ENCODE measurements at regions of chr17 and their contacts with region 1.

Region 1: GRCh38 chr17:55238179-55238930 is 26.4 kb upstream of the HLF start:
- DNase-seq: peak; percentile 94 to 97
- ATAC-seq: peak; percentile 98 to 100 (median 100)
- H3K4me3 ChIP-seq: peak overlapping the region; percentile 68
- H3K27ac ChIP-seq: peak overlapping the region; percentile 71
- H3K4me1 ChIP-seq: peaks cover 6% of the 10 kb centered on the region
- H3K27me3 ChIP-seq: peaks cover 0 to 2% (median 0%) of the 10 kb centered on the region in 3 donors
- CTCF ChIP-seq: no peak

Region 2: GRCh38 chr17:55053855-55054254 is 184.5 kb before region 1 on chr17:
- intact Hi-C with region 1: no loop called
- DNase-seq: no peak
- ATAC-seq: no peak
- H3K4me3 ChIP-seq: no peak overlapping the region
- H3K27ac ChIP-seq: no peak overlapping the region
- H3K4me1 ChIP-seq: no peaks in the 10 kb centered on the region
- H3K27me3 ChIP-seq: no peaks in the 10 kb centered on the region
- CTCF ChIP-seq: peak; percentile 32

Region 3: GRCh38 chr17:55264645-55265298 is 26.4 kb after region 1 on chr17 and contains the start of gene HLF:
- intact Hi-C with region 1: loop called (anchors 1 to 2 kb)
- DNase-seq: peak; percentile 88 to 92
- ATAC-seq: peak; percentile 95 to 98 (median 96)
- H3K4me3 ChIP-seq: peak within 1 kb of the TSS; percentile 74
- H3K27ac ChIP-seq: peak within 1 kb of the TSS; percentile 61
- H3K4me1 ChIP-seq: peaks cover 14% of the 10 kb centered on the region
- H3K27me3 ChIP-seq: no peaks in the 10 kb centered on the region
- CTCF ChIP-seq: no peak
- total RNA-seq, gene HLF: 3.7 to 5.0 (median 4.4) TPM